ENCODE measurements at regions of chr19 and their contacts with region 1.

Region 1: DNA sequence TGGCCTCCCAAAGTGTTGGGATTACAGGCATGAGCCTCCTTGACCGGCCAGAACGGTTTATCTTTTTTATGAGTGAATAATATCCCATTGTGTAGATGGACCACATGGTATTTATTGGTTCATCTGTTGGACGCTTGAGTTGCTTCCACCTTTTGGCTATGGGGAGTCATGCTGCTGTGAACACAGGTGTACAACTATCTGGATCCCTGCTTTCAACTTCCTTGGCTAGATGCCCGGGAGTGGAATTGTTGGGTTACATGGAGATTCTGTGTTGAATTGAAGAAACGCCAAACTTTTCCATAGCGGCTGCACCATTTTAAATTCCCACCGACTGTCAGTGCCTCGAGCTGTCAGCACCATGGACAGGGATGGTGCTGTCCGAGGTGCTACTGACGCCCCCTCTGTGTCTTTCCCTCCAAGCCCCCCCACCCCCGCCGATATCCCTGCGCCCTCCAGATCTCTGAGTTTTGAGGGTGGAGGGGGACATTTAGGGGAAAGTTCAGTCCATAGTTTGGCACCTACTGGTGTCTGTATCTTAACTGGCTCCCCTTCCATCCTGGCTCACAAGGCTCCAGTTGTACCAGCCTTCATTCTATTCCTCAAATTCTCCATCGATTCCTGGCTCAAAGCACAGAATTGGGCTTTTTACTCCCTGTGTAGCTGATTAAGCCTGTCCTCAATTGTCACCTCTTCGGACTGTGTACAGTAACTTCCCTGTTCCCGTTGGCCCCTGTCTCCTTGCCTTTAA is 27.3 kb downstream of the PNPLA6 start:
- DNase-seq: no peak
- H3K4me3 ChIP-seq: no peak overlapping the region
- H3K27ac ChIP-seq: no peak overlapping the region
- H3K4me1 ChIP-seq: no peaks in the 10 kb centered on the region
- H3K27me3 ChIP-seq: no peaks in the 10 kb centered on the region
- CTCF ChIP-seq: no peak
- EP300 ChIP-seq: no peak
- RAD21 ChIP-seq: no peak

Region 2: DNA sequence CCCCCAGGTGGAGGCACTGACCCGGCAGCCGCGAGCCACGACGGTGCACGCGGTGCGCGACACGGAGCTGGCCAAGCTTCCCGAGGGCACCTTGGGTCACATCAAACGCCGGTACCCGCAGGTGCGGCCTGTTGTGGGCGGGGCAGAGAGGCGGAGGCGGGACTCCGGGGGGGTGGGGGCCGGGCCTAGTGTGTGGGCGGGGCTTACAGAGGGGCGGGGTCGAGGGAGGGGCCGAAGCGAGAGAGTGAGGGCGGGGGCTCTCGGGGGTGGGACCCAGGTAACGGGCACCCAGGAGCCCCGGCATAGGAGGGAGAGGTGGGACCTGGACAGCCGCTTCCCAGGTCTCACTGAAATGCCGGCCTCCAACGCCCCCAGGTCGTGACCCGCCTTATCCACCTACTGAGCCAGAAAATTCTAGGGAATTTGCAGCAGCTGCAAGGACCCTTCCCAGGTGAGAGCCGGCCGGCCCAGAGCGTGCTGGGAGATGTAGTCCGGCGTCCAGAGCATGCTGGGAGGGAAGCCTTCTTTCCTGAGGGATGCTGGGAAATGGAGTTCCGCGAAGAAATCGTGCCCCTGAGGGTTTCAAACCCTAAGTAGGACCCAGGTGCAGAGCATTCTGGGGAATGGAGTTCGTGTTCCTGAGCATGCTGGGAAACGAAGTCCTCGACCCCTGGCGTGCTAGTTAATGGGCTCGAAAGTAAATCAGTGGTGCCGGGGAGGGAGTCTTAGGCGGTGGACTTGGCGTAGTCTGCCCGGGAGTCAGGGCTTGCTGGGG is 11.6 kb before region 1 on chr19:
- CTCF ChIA-PET with region 1: interaction called, 19 read pairs
- POLR2A ChIA-PET with region 1: no interaction called
- DNase-seq: peak; percentile 98
- H3K4me3 ChIP-seq: peak overlapping the region in 1 of 2 experiments; percentile 32; a peak in 1 of 4 replicates
- H3K27ac ChIP-seq: peak overlapping the region in 1 of 2 experiments; percentile 34; a peak in 1 of 4 replicates
- H3K4me1 ChIP-seq: no peaks in the 10 kb centered on the region; a peak in 1 of 4 replicates
- H3K27me3 ChIP-seq: no peaks in the 10 kb centered on the region
- CTCF ChIP-seq: no peak
- EP300 ChIP-seq: no peak
- RAD21 ChIP-seq: no peak

Region 3: DNA sequence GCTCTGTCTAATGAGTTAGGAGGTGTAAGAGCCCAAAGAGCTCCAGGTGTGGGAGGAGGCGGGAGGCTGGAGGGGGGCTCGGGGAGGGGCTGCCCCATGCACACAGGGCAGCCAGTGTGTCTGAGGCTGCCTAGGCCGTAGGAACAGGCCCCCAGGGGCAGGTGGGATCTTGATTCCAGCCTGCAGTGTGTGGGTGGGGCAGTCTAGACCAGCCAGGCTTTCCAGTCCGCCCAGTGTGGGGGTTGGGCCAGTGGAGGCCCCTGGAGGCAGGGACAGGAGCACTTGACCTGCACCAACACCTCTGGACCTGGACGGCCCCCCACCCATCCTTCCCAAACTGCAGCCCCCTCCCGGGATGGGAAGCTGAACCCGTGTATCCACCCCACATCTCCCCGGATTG is 27.4 kb after region 1 on chr19:
- CTCF ChIA-PET with region 1: interaction called, 19 read pairs
- POLR2A ChIA-PET with region 1: no interaction called
- DNase-seq: no peak
- H3K4me3 ChIP-seq: no peak overlapping the region
- H3K27ac ChIP-seq: no peak overlapping the region
- H3K4me1 ChIP-seq: no peaks in the 10 kb centered on the region
- H3K27me3 ChIP-seq: peaks cover 26% of the 10 kb centered on the region; the same call in 1 of the 2 replicates
- CTCF ChIP-seq: no peak
- EP300 ChIP-seq: no peak
- RAD21 ChIP-seq: no peak

Region 4: DNA sequence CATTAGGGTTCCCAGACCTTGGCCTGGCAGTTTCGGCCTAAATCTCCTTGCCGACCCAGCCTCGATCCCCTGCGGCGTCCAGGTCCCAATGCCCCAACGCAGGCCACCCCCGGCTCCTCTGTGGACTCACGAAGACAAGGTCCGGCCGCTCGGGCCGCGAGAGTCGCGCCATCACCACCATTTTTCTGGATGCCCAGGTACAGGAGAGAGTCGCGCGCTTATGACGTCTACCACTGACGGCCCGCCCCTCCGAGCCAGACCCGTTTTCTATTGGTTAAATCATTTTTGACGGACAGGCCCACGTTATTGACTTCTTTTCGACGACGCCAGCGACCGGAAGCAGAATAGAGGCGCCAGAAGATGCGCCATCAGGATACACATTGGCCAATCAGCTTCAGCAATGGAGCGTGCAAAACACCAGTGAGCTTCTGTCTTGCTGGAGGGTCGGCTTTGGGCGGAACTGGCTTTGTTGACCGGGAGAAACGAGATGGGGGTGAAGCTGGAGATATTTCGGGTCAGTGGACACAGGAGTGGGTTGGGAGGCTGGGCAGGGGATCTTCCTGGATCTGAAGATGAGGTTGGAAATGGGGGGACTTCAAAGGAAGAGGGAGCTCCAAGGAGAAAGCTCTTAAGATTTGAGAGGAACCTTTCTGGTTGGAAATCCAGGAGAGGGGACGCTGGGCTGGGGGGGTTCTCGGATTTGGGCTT is 66.7 kb after region 1 on chr19 and contains the starts of genes PET100 and XAB2:
- CTCF ChIA-PET with region 1: interaction called, 25 read pairs
- POLR2A ChIA-PET with region 1: interaction called, 5 read pairs
- DNase-seq: peak; percentile 97
- H3K4me3 ChIP-seq: peak within 1 kb of the TSS; percentile 100
- H3K27ac ChIP-seq: peak within 1 kb of the TSS; percentile 51 to 73; a peak in 3 of 4 replicates
- H3K4me1 ChIP-seq: peaks cover 8 to 20% of the 10 kb centered on the region in 2 experiments; a peak in 2 of 4 replicates
- H3K27me3 ChIP-seq: no peaks in the 10 kb centered on the region; the same call in 1 of the 2 replicates
- CTCF ChIP-seq: no peak
- EP300 ChIP-seq: no peak
- RAD21 ChIP-seq: no peak
- polyA plus RNA-seq, gene PET100: 48.1 and 54.0 TPM in 2 replicates
- polyA plus RNA-seq, gene XAB2: 36.5 and 43.3 TPM in 2 replicates

Region 5: GRCh38 chr19:7658219-7658686 is 95.4 kb after region 1 on chr19:
- CTCF ChIA-PET with region 1: interaction called, 17 read pairs
- POLR2A ChIA-PET with region 1: no interaction called
- DNase-seq: no peak
- H3K4me3 ChIP-seq: no peak overlapping the region
- H3K27ac ChIP-seq: no peak overlapping the region
- H3K4me1 ChIP-seq: no peaks in the 10 kb centered on the region
- H3K27me3 ChIP-seq: peaks cover 27% of the 10 kb centered on the region
- CTCF ChIP-seq: no peak
- EP300 ChIP-seq: no peak
- RAD21 ChIP-seq: no peak

Region 6: GRCh38 chr19:7680606-7681339 is 118.0 kb after region 1 on chr19 and contains the start of gene TRAPPC5:
- CTCF ChIA-PET with region 1: interaction called, 171 read pairs
- POLR2A ChIA-PET with region 1: interaction called, 8 read pairs
- DNase-seq: peak; percentile 98
- H3K4me3 ChIP-seq: peak within 1 kb of the TSS; percentile 87 to 92
- H3K27ac ChIP-seq: peak within 1 kb of the TSS in 1 of 2 experiments; percentile 72; a peak in 1 of 4 replicates
- H3K4me1 ChIP-seq: peaks cover 0 to 13% of the 10 kb centered on the region in 2 experiments; a peak in 1 of 4 replicates
- H3K27me3 ChIP-seq: peaks cover 28% of the 10 kb centered on the region
- CTCF ChIP-seq: peak; percentile 87
- EP300 ChIP-seq: no peak
- RAD21 ChIP-seq: peak; percentile 82
- polyA plus RNA-seq, gene TRAPPC5: 44.1 and 49.4 TPM in 2 replicates

Measured in SK-N-SH (cell line).